Posterior vena cava (tissue), 2 donors: ENCODE measurements at regions of chr1 and their contacts with region 1.

Region 1: GRCh38 chr1:182962554-182963115 is 9.7 kb upstream of the SHCBP1L start:
- DNase-seq: peak; percentile 91

Region 2: GRCh38 chr1:183023601-183024316 is 61.1 kb after region 1 on chr1:
- intact Hi-C with region 1: loop called in 1 of 2 experiments (anchors 10 kb)
- DNase-seq: peak; percentile 83

Region 3: GRCh38 chr1:183139281-183139942 is 176.8 kb after region 1 on chr1:
- intact Hi-C with region 1: loop called in 1 of 2 experiments (anchors 10 kb)
- DNase-seq: no peak

Region 4: GRCh38 chr1:183227963-183228649 is 265.5 kb after region 1 on chr1:
- intact Hi-C with region 1: loop called in 1 of 2 experiments (anchors 10 kb)
- DNase-seq: no peak

Region 5: GRCh38 chr1:183270541-183271141 is 308.0 kb after region 1 on chr1:
- intact Hi-C with region 1: no loop called
- DNase-seq: peak; percentile 40